Colonic mucosa (tissue), 4 donors: ENCODE measurements at regions of chr4 and their contacts with region 1.

Region 1: GRCh38 chr4:140861359-140862176 is 105.4 kb upstream of the TBC1D9 start:
- DNase-seq: peak; percentile 62
- H3K4me3 ChIP-seq: no peak overlapping the region
- H3K27ac ChIP-seq: no peak overlapping the region
- H3K4me1 ChIP-seq: no peaks in the 10 kb centered on the region
- H3K27me3 ChIP-seq: no peaks in the 10 kb centered on the region
- CTCF ChIP-seq: peak; percentile 60

Region 2: DNA sequence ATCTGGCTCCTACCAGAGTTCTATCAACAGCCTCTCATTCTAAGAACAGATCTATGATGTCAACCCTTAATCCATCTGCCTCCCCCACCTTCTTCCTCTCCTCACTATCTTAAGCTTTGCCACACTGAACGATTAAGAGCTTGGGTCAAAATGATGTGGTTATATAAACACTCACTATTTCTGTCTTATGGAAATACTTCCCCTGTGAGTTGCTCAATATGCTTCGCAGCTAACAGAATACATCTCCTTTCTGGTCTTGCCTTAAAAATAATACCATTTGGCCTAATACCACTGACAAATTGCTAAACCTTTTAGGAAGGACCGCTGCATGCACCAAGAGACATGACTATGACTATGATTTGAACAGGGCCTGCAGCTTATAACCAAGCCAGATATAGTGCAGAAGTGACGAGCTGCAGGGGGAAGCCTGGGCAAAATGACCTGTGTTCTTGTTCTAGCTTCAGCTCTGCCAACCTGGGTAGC is 140.8 kb after region 1 on chr4:
- intact Hi-C with region 1: no loop called
- DNase-seq: no peak
- H3K4me3 ChIP-seq: no peak overlapping the region
- H3K27ac ChIP-seq: no peak overlapping the region
- H3K4me1 ChIP-seq: no peaks in the 10 kb centered on the region
- H3K27me3 ChIP-seq: no peaks in the 10 kb centered on the region
- CTCF ChIP-seq: no peak

Region 3: DNA sequence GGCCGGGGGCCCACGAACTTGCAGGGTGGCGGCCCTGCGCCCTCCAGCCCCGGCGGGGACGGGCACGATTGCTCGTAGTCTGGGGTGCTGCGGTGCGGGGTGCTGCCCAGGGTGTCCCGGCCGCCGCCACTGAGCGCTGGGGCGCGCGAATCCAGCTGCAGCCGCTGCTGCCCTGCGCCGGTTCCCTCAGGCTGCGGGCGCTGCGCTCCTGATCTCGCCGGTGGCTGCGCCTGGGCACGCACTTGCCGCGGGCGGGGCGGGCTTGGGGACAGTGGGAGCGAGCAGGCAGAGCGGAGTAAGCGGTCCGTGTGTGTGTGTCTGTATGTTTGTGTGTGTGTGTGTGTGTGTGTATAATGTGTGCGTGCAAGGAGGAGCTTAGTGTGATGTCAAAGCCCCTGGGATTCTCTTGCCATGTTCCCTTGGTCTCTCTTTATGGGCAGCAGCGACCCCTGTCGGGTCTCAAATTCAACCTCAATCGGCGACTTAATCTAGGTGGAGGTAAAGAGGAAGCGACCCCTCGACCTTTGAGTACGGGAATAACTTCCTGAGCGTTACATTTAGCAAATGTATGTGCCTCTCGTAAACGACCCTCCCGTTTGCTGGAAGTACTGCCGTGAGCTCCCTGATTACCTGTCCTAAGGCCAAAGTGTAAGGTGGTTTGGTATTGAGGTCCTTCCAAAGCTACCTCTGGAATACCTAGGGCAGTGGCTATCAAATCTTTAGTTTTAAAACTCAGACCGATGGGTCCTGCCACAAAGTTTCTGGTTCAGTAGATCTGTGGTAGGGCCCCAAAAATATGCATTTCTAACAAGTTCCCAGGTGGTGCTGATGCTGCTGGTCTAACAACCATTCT is 271.8 kb after region 1 on chr4 and contains the start of gene RNF150:
- intact Hi-C with region 1: loop called (anchors 2 kb)
- DNase-seq: peak; percentile 66
- H3K4me3 ChIP-seq: peak within 1 kb of the TSS; percentile 66
- H3K27ac ChIP-seq: peak within 1 kb of the TSS; percentile 36
- H3K4me1 ChIP-seq: no peaks in the 10 kb centered on the region
- H3K27me3 ChIP-seq: peaks cover 12% of the 10 kb centered on the region
- CTCF ChIP-seq: no peak
- total RNA-seq, gene RNF150: 0.86 to 6.9 TPM